ENCODE measurements at regions of chr7 and their contacts with region 1.

Region 1: DNA sequence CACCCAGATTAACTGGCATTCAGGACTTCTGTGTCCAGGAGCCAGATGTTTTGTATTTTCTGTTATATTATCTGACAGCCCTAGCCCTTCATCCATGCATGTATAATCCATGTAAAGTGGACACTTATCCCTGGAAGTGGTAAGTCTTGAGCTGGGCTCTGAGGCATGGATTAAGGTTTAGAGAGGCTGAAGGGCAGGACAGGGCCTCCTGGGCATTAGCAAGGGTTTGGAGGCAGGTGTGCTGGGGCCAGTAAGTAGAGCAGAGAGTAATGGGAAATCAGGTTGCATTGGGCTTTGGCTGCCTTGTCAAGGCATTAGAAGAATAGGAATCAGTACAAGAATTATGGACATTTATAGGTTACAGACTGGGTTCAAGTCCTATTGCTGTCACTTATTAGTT is 138.0 kb downstream of the DYNC1I1 start:
- DNase-seq: no peak
- ATAC-seq: no peak
- H3K4me3 ChIP-seq: no peak overlapping the region
- H3K27ac ChIP-seq: no peak overlapping the region
- H3K4me1 ChIP-seq: no peaks in the 10 kb centered on the region
- H3K27me3 ChIP-seq: no peaks in the 10 kb centered on the region
- CTCF ChIP-seq: no peak

Region 2: GRCh38 chr7:95989301-95989700 is 79.0 kb after region 1 on chr7:
- intact Hi-C with region 1: loop called in 1 of 10 experiments (anchors 5 kb)
- DNase-seq: no peak
- ATAC-seq: peak in 1 of 8 donors; percentile 39
- H3K4me3 ChIP-seq: no peak overlapping the region
- H3K27ac ChIP-seq: no peak overlapping the region
- H3K4me1 ChIP-seq: no peaks in the 10 kb centered on the region
- H3K27me3 ChIP-seq: no peaks in the 10 kb centered on the region
- CTCF ChIP-seq: no peak

Measured in heart right ventricle (tissue), 16 donors.